ENCODE measurements at regions of chrX and their contacts with region 1.

Region 1: DNA sequence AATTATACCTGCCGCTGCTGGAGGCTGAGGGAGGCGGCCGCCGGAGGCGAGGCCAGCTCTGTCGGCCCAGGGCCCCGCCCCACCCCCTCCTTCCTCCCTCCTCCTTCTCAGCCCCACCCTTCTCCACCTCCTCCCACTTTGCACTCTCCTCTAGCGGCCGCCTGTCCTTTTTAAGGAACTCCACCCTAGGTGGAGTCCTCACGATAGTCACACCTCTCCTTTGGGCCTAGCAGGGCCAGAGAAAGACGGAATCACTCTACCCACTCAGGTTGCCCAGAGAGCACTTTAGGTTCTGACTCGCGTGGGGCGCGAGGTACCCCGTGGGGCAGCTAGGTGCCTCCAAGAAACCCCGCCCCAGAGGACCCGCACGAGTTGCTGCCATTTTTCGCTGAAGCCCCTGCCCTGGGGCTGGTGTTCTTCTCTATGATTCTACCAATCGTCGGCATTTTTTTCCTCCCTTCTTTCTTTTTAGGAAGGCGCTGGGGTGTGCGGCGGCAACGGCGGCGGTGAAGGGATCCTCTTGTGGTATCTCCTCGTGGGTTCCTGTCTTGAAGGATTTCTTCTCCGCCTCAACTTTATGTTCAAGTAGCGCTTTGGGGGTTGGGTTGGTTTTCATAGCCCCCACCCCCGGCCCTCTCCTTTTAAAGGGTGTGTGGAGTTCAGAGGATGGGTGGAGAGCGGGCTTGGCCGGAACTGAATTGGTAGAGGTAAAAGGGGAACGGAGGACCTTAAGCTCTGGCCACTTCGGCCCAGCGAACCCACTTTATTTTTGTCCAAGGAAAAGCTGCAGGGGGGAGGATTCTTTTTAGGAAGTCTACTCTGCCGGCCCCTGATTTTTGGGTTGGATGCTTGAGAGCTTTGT is at the start of gene KLF8:
- DNase-seq: no peak
- ATAC-seq: peak; percentile 79
- H3K4me3 ChIP-seq: peak within 1 kb of the TSS; percentile 49
- H3K27ac ChIP-seq: peak within 1 kb of the TSS; percentile 25; the same call in 1 of the 2 replicates
- H3K4me1 ChIP-seq: no peaks in the 10 kb centered on the region
- H3K27me3 ChIP-seq: no peaks in the 10 kb centered on the region
- CTCF ChIP-seq: no peak
- EP300 ChIP-seq: no peak
- POLR2A ChIP-seq: no peak
- RAD21 ChIP-seq: no peak
- polyA plus RNA-seq, gene KLF8: 0.31 to 0.39 TPM

Region 2: GRCh38 chrX:56219700-56220099 is 12.8 kb before region 1 on chrX:
- CTCF ChIA-PET with region 1: interaction called, 20 read pairs
- POLR2A ChIA-PET with region 1: no interaction called
- RAD21 ChIA-PET with region 1: no interaction called
- SMC1A ChIA-PET with region 1: interaction called, 4 read pairs
- in situ Hi-C with region 1: no loop called
- intact Hi-C with region 1: no loop called
- DNase-seq: no peak
- ATAC-seq: peak; percentile 35; the same call in 1 of the 3 replicates
- H3K4me3 ChIP-seq: no peak overlapping the region
- H3K27ac ChIP-seq: no peak overlapping the region
- H3K4me1 ChIP-seq: no peaks in the 10 kb centered on the region
- H3K27me3 ChIP-seq: no peaks in the 10 kb centered on the region
- CTCF ChIP-seq: peak in 2 of 3 experiments; percentile 6 to 18; a peak in 1 of 6 replicates
- EP300 ChIP-seq: no peak
- POLR2A ChIP-seq: no peak
- RAD21 ChIP-seq: no peak

Measured in GM12878 (cell line).